ENCODE measurements at regions of chr16 and their contacts with region 1.

Region 1: GRCh38 chr16:46689365-46690280 is at the start of gene ORC6:
- DNase-seq: peak; percentile 97
- H3K4me3 ChIP-seq: peak within 1 kb of the TSS; percentile 71
- H3K4me3 Mint-ChIP-seq: no peak within 1 kb of the TSS
- H3K27ac Mint-ChIP-seq: no peak within 1 kb of the TSS
- H3K4me1 ChIP-seq: peaks cover 40% of the 10 kb centered on the region
- H3K4me1 Mint-ChIP-seq: peaks cover 26% of the 10 kb centered on the region
- H3K27me3 ChIP-seq: no peaks in the 10 kb centered on the region
- H3K27me3 Mint-ChIP-seq: no peaks in the 10 kb centered on the region
- CTCF ChIP-seq: peak; percentile 33 to 55
- total RNA-seq, gene ORC6: 55.2 and 56.3 TPM in 2 replicates

Region 2: GRCh38 chr16:46629331-46630219 is 60.0 kb before region 1 on chr16:
- CTCF ChIA-PET with region 1: no interaction called
- POLR2A ChIA-PET with region 1: interaction called, 3 read pairs
- intact Hi-C with region 1: loop called (anchors 2 kb)
- DNase-seq: peak in 1 of 2 experiments; percentile 26
- H3K4me3 ChIP-seq: no peak overlapping the region
- H3K4me3 Mint-ChIP-seq: no peak overlapping the region
- H3K27ac Mint-ChIP-seq: no peak overlapping the region
- H3K4me1 ChIP-seq: peaks cover 6% of the 10 kb centered on the region; the same call in 1 of the 2 replicates
- H3K4me1 Mint-ChIP-seq: no peaks in the 10 kb centered on the region
- H3K27me3 ChIP-seq: no peaks in the 10 kb centered on the region
- H3K27me3 Mint-ChIP-seq: no peaks in the 10 kb centered on the region
- CTCF ChIP-seq: peak; percentile 33 to 50

Region 3: DNA sequence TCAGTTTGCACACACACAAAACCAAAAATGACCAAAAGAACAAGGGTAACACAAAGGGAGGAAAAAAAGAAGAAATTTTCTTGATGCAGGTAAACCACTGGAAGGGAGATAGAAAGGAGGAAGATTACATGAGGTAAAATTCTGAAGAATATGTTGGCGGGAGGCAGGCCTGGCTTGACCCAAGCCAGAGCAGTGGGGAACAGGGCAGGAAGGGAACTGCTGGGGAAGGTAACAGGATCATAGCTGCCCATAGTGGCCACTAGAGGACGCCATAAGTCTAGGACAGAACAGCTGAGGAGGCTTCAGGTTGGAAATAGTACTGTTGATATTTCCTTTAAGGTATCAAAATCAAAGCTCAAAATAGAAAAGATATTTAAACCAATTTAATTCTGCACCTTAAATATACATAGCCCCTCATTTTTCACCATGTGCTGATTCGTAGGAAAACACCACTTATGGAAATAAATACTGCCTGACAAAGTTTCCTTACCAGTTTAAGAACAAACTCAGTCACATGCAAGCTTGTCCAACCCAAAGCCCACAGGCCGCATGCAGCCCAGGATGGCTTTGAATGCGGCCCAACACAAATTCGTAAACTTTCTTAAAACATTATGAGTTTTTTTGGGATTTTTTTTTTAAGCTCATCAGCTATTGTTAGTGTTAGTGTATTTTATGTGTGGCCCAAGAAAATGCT is 16.2 kb before region 1 on chr16:
- CTCF ChIA-PET with region 1: interaction called, 11 read pairs
- POLR2A ChIA-PET with region 1: no interaction called
- intact Hi-C with region 1: loop called (anchors 1 kb)
- DNase-seq: peak; percentile 62 to 67
- H3K4me3 ChIP-seq: no peak overlapping the region
- H3K4me3 Mint-ChIP-seq: no peak overlapping the region
- H3K27ac Mint-ChIP-seq: no peak overlapping the region
- H3K4me1 ChIP-seq: peaks cover 2% of the 10 kb centered on the region; the same call in 1 of the 2 replicates
- H3K4me1 Mint-ChIP-seq: peaks cover 3% of the 10 kb centered on the region
- H3K27me3 ChIP-seq: no peaks in the 10 kb centered on the region
- H3K27me3 Mint-ChIP-seq: no peaks in the 10 kb centered on the region
- CTCF ChIP-seq: peak; percentile 79 to 97

Region 4: GRCh38 chr16:46748775-46749705 is 59.4 kb after region 1 on chr16:
- CTCF ChIA-PET with region 1: no interaction called
- POLR2A ChIA-PET with region 1: no interaction called
- intact Hi-C with region 1: loop called (anchors 1 kb)
- DNase-seq: no peak
- H3K4me3 ChIP-seq: no peak overlapping the region
- H3K4me3 Mint-ChIP-seq: peak overlapping the region; percentile 53
- H3K27ac Mint-ChIP-seq: peak overlapping the region; percentile 98
- H3K4me1 ChIP-seq: peaks cover 29% of the 10 kb centered on the region
- H3K4me1 Mint-ChIP-seq: peaks cover 18% of the 10 kb centered on the region
- H3K27me3 ChIP-seq: no peaks in the 10 kb centered on the region
- H3K27me3 Mint-ChIP-seq: no peaks in the 10 kb centered on the region
- CTCF ChIP-seq: no peak

Region 5: DNA sequence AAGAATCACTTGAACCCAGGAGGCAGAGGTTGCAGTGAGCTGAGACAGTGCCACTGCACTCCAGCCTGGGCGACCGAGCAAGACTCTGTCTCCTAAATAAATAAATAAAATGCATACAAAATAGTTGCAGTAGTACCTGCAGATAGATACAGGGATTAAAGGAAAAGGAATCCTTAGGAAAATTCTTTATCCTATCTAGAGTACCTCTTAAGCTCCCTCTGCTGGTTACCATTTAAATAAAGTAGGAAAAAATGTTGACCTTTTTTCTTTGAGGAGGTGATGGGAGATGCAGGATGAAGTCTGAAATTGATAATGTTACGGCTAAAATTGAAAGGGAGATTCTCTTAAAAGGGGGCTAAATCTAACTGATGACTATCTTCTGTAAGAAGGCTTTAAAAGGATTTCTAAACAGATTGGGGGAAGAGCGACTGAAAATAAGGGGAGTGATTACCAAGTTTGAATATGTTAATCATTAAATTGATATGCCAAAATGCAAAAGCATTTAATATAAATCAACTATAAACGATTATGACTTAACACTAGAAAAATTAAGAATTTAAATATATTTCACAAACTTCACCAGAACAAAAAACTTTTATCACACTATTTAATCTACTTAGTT is 111.9 kb after region 1 on chr16:
- CTCF ChIA-PET with region 1: interaction called, 4 read pairs
- POLR2A ChIA-PET with region 1: no interaction called
- intact Hi-C with region 1: loop called (anchors 5 kb)
- DNase-seq: peak in 1 of 2 experiments; percentile 24
- H3K4me3 ChIP-seq: no peak overlapping the region
- H3K4me3 Mint-ChIP-seq: no peak overlapping the region
- H3K27ac Mint-ChIP-seq: no peak overlapping the region
- H3K4me1 ChIP-seq: peaks cover 4% of the 10 kb centered on the region
- H3K4me1 Mint-ChIP-seq: peaks cover 6% of the 10 kb centered on the region
- H3K27me3 ChIP-seq: no peaks in the 10 kb centered on the region
- H3K27me3 Mint-ChIP-seq: no peaks in the 10 kb centered on the region
- CTCF ChIP-seq: peak; percentile 40 to 64

Measured in Caco-2 (cell line).